ENCODE measurements at regions of chr11 and their contacts with region 1.

Region 1: GRCh38 chr11:1832211-1832919 is 2.4 kb upstream of the SYT8 start:
- DNase-seq: peak; percentile 56
- H3K4me3 ChIP-seq: peak overlapping the region; percentile 53
- H3K27ac ChIP-seq: no peak overlapping the region
- H3K4me1 ChIP-seq: peaks cover 16% of the 10 kb centered on the region
- H3K27me3 ChIP-seq: peaks cover 30% of the 10 kb centered on the region
- CTCF ChIP-seq: peak; percentile 99

Region 2: GRCh38 chr11:1694064-1694845 is 138.1 kb before region 1 on chr11:
- intact Hi-C with region 1: loop called (anchors 2 kb)
- DNase-seq: peak; percentile 90
- H3K4me3 ChIP-seq: peak overlapping the region; percentile 61
- H3K27ac ChIP-seq: peak overlapping the region; percentile 77
- H3K4me1 ChIP-seq: peaks cover 15% of the 10 kb centered on the region
- H3K27me3 ChIP-seq: peaks cover 15% of the 10 kb centered on the region
- CTCF ChIP-seq: peak; percentile 94

Region 3: GRCh38 chr11:1728931-1729691 is 103.3 kb before region 1 on chr11:
- intact Hi-C with region 1: no loop called
- DNase-seq: no peak
- H3K4me3 ChIP-seq: no peak overlapping the region
- H3K27ac ChIP-seq: no peak overlapping the region
- H3K4me1 ChIP-seq: no peaks in the 10 kb centered on the region
- H3K27me3 ChIP-seq: peaks cover 81% of the 10 kb centered on the region
- CTCF ChIP-seq: no peak